Left lung (tissue), 14 donors: ENCODE measurements at regions of chr5 and their contacts with region 1.

Region 1: GRCh38 chr5:42583322-42583721 is 160.1 kb downstream of the GHR start:
- DNase-seq: peak in 1 of 4 donors; percentile 51
- ATAC-seq: peak; percentile 87
- H3K4me3 ChIP-seq: no peak overlapping the region
- H3K27ac ChIP-seq: no peak overlapping the region
- H3K4me1 ChIP-seq: peaks cover 5% of the 10 kb centered on the region in 2 donors
- H3K27me3 ChIP-seq: no peaks in the 10 kb centered on the region
- CTCF ChIP-seq: peak; percentile 54 to 75

Region 2: GRCh38 chr5:42423285-42424165 is 159.8 kb before region 1 on chr5 and contains the start of gene GHR:
- intact Hi-C with region 1: loop called in 1 of 2 experiments (anchors 5 kb)
- DNase-seq: peak; percentile 79 to 91 (median 88)
- ATAC-seq: peak; percentile 98
- H3K4me3 ChIP-seq: peak within 1 kb of the TSS; percentile 45 to 47
- H3K27ac ChIP-seq: peak within 1 kb of the TSS; percentile 70 to 82
- H3K4me1 ChIP-seq: peaks cover 0 to 14% of the 10 kb centered on the region in 2 donors
- H3K27me3 ChIP-seq: peaks cover 6 to 39% of the 10 kb centered on the region in 2 donors
- CTCF ChIP-seq: peak; percentile 68 to 73
- polyA plus RNA-seq, gene GHR: 19.2 to 30.5 (median 28.0) TPM

Region 3: GRCh38 chr5:43008369-43009153 is 425.2 kb after region 1 on chr5:
- intact Hi-C with region 1: no loop called
- DNase-seq: peak; percentile 73 to 91 (median 87)
- ATAC-seq: peak; percentile 89
- H3K4me3 ChIP-seq: peak overlapping the region; percentile 22 to 48
- H3K27ac ChIP-seq: peak overlapping the region; percentile 95 to 96
- H3K4me1 ChIP-seq: peaks cover 0 to 25% of the 10 kb centered on the region in 2 donors
- H3K27me3 ChIP-seq: peaks cover 0 to 68% of the 10 kb centered on the region in 2 donors
- CTCF ChIP-seq: no peak